Motor neuron (in vitro differentiated cells): ENCODE measurements at regions of chr2 and their contacts with region 1.

Region 1: GRCh38 chr2:126761981-126762878 is 106.3 kb downstream of the GYPC start:
- ATAC-seq: peak in 2 of 8 experiments; percentile 3 to 19
- H3K4me3 ChIP-seq: no peak overlapping the region
- H3K27ac ChIP-seq: no peak overlapping the region
- H3K4me1 ChIP-seq: peaks cover 9 to 34% of the 10 kb centered on the region in 2 donors

Region 2: GRCh38 chr2:126513033-126513432 is 249.2 kb before region 1 on chr2:
- in situ Hi-C with region 1: loop called in 1 of 9 experiments (anchors 25 kb)
- ATAC-seq: peak in 7 of 8 experiments; percentile 71 to 94 (median 86)
- H3K4me3 ChIP-seq: no peak overlapping the region
- H3K27ac ChIP-seq: no peak overlapping the region
- H3K4me1 ChIP-seq: peaks cover 4 to 15% of the 10 kb centered on the region in 2 donors

Region 3: DNA sequence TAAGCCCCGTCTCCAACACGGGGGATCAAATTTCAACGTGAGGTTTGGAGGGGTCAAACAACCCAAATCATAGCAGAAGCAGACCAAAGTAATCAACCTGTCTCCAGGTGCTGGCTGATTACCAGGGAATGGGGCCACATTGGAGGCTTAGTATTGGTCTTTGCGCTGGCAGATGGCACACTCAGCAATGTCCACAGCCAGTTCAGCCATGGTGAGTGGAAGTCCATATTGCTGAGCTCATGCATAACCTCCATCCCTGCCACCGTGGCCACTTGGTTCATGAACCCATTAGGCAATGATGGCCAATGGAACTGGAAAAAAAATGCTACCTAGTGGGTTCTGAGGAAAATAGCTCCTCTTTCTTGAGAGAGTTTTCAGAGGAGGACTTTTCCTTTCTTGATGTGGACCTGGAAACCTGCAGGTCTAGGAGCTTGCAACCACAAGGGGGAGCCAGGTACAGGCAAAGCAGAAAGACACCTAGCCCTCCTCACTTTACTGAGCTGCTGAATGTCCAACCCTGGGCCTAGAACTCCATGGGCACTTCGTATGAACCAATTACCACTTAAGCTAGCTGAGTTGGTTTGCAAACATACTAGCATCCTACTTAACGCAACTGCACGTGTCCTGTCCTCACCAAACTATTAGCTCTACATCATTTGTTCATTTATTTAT is 234.3 kb before region 1 on chr2:
- in situ Hi-C with region 1: loop called in 2 of 9 experiments (anchors 25 kb)
- ATAC-seq: peak in 3 of 8 experiments; percentile 89 to 92 (median 90)
- H3K4me3 ChIP-seq: no peak overlapping the region
- H3K27ac ChIP-seq: no peak overlapping the region
- H3K4me1 ChIP-seq: no peaks in the 10 kb centered on the region

Region 4: GRCh38 chr2:126634273-126634861 is 127.9 kb before region 1 on chr2:
- in situ Hi-C with region 1: loop called in 1 of 9 experiments (anchors 25 kb)
- ATAC-seq: peak in 3 of 8 experiments; percentile 26 to 53 (median 38)
- H3K4me3 ChIP-seq: no peak overlapping the region
- H3K27ac ChIP-seq: no peak overlapping the region
- H3K4me1 ChIP-seq: no peaks in the 10 kb centered on the region

Region 5: GRCh38 chr2:128635361-128635900 is 1873.2 kb after region 1 on chr2:
- in situ Hi-C with region 1: no loop called
- ATAC-seq: no peak
- H3K4me3 ChIP-seq: no peak overlapping the region
- H3K27ac ChIP-seq: no peak overlapping the region
- H3K4me1 ChIP-seq: peaks cover 29 to 37% of the 10 kb centered on the region in 2 donors